IMR-90 (cell line): ENCODE measurements at regions of chr1 and their contacts with region 1.

Region 1: DNA sequence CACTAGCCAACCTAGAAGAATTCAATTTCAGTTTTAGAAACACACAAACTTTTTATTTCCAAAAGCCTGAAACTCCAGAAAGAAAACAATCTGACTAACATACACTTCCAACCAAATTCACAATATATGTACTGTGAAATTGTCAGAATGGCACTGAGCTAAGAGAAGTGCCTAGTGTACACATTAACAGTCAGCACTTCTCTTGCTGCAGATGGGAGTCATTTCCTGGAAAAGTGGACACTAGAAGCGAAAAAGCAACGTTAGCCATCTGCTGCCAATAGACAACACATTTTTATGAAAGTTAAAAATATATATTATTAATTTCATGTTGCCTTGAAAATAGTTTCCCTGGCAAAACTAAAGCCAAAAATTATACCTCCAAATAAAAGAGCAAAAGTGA is 66.1 kb downstream of the EPS15 start:
- DNase-seq: no peak
- ATAC-seq: no peak
- H3K4me3 ChIP-seq: no peak overlapping the region
- H3K27ac ChIP-seq: no peak overlapping the region
- H3K4me1 ChIP-seq: no peaks in the 10 kb centered on the region
- H3K27me3 ChIP-seq: no peaks in the 10 kb centered on the region
- CTCF ChIP-seq: no peak
- POLR2A ChIP-seq: no peak
- RAD21 ChIP-seq: no peak

Region 2: GRCh38 chr1:51463561-51463960 is 10.6 kb after region 1 on chr1:
- CTCF ChIA-PET with region 1: interaction called, 11 read pairs
- POLR2A ChIA-PET with region 1: no interaction called
- dilution Hi-C with region 1: no loop called
- in situ Hi-C with region 1: no loop called
- intact Hi-C with region 1: no loop called
- DNase-seq: no peak
- ATAC-seq: no peak
- H3K4me3 ChIP-seq: no peak overlapping the region
- H3K27ac ChIP-seq: no peak overlapping the region
- H3K4me1 ChIP-seq: no peaks in the 10 kb centered on the region
- H3K27me3 ChIP-seq: no peaks in the 10 kb centered on the region
- CTCF ChIP-seq: no peak
- POLR2A ChIP-seq: no peak
- RAD21 ChIP-seq: no peak